ENCODE measurements at regions of chr15 and their contacts with region 1.

Region 1: DNA sequence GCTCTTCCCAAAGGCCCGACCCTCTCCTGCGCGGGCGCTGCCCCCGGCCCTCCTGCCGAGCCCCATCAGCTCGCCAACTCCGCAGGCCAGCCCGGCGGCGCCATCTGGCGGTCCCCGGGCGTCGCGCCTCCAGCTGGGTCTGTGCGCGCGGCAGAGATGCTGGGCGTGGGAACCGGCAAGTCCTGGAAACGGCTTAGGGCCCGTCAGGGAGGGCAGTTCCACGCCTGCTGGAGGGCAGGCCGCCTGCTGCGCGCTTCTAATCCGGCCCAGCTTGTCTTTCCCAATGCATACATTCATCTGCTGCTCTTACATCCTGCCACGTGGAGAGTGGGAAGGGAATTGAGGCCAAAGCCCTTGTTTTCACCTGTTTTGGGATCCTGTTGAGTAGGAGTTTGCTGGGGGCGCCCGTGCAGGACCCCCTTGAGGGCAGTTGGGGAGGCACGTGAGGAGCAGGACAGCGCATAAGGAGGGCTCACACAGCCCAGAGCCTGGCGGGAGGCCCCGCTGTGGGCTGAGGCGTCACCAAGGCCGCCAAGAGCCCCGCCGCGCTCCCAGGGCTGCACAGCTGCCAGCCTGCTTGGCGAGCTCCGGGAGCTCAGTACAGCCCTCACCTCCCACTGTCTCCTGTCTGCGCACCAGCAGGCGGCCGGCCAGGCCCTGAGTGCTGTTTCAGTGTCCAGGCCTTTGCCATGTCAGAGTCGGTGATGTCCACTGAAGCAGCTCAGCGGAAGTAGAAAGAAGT is 165.6 kb downstream of the NSMCE3 start:
- DNase-seq: peak in 8 of 9 experiments; percentile 27 to 67 (median 57)
- ATAC-seq: peak; percentile 77
- H3K4me3 ChIP-seq: no peak overlapping the region
- H3K4me3 Mint-ChIP-seq: no peak overlapping the region
- H3K27ac ChIP-seq: no peak overlapping the region
- H3K27ac Mint-ChIP-seq: no peak overlapping the region
- H3K4me1 ChIP-seq: no peaks in the 10 kb centered on the region
- H3K4me1 Mint-ChIP-seq: peaks cover 11% of the 10 kb centered on the region
- H3K27me3 ChIP-seq: no peaks in the 10 kb centered on the region
- H3K27me3 Mint-ChIP-seq: no peaks in the 10 kb centered on the region
- CTCF ChIP-seq: peak; percentile 57

Region 2: DNA sequence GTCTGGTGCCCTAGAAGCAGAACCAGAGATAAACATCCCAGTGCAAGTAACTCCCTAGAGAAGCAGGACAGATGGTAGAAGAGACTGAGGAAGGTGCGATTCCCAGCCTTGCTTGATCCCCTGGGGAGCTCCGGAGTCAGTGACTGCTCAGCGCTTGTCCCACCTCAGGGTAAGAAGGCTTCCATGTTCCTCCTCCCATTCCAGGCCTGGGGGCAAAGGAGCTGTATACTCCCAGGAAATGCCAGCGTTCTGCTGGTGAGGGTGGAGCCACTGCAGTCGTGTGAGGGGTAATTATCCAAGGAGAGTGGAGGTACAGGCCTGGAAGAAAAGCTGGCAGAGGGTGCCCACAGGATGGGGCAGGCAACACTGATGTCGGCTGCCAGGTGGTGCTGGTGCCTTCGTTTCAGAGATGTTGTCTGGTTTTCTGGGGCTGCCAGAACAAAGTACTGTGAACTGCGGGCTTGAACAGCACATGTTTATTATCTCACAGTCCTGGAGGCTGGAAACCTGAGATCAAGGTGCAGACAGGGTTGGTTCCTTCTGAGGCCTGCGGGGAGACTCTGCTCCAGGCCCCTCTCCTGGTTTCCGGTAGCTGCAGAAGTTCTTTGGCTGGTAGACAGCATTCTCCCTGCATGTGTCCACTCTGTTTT is 230.3 kb before region 1 on chr15:
- CTCF ChIA-PET with region 1: interaction called, 19 read pairs
- POLR2A ChIA-PET with region 1: no interaction called
- intact Hi-C with region 1: no loop called
- DNase-seq: peak in 6 of 9 experiments; percentile 37 to 74 (median 66)
- ATAC-seq: peak; percentile 88
- H3K4me3 ChIP-seq: no peak overlapping the region
- H3K4me3 Mint-ChIP-seq: no peak overlapping the region
- H3K27ac ChIP-seq: no peak overlapping the region
- H3K27ac Mint-ChIP-seq: no peak overlapping the region
- H3K4me1 ChIP-seq: peaks cover 21% of the 10 kb centered on the region
- H3K4me1 Mint-ChIP-seq: peaks cover 21% of the 10 kb centered on the region
- H3K27me3 ChIP-seq: no peaks in the 10 kb centered on the region
- H3K27me3 Mint-ChIP-seq: no peaks in the 10 kb centered on the region
- CTCF ChIP-seq: peak; percentile 60

Region 3: GRCh38 chr15:28921919-28922706 is 181.9 kb before region 1 on chr15:
- CTCF ChIA-PET with region 1: interaction called, 10 read pairs
- POLR2A ChIA-PET with region 1: no interaction called
- intact Hi-C with region 1: no loop called
- DNase-seq: peak in 1 of 9 experiments; percentile 30
- ATAC-seq: no peak
- H3K4me3 ChIP-seq: peak overlapping the region in 1 of 2 experiments; percentile 4
- H3K4me3 Mint-ChIP-seq: peak overlapping the region; percentile 79
- H3K27ac ChIP-seq: peak overlapping the region in 1 of 2 experiments; percentile 60
- H3K27ac Mint-ChIP-seq: peak overlapping the region; percentile 86
- H3K4me1 ChIP-seq: peaks cover 72% of the 10 kb centered on the region
- H3K4me1 Mint-ChIP-seq: peaks cover 81% of the 10 kb centered on the region
- H3K27me3 ChIP-seq: no peaks in the 10 kb centered on the region
- H3K27me3 Mint-ChIP-seq: no peaks in the 10 kb centered on the region
- CTCF ChIP-seq: no peak

Region 4: GRCh38 chr15:29090617-29091466 is 13.2 kb before region 1 on chr15:
- CTCF ChIA-PET with region 1: interaction called, 68 read pairs
- POLR2A ChIA-PET with region 1: interaction called, 3 read pairs
- intact Hi-C with region 1: no loop called
- DNase-seq: peak; percentile 21 to 70 (median 52)
- ATAC-seq: peak; percentile 77
- H3K4me3 ChIP-seq: peak overlapping the region in 1 of 2 experiments; percentile 30
- H3K4me3 Mint-ChIP-seq: no peak overlapping the region
- H3K27ac ChIP-seq: peak overlapping the region in 1 of 2 experiments; percentile 74
- H3K27ac Mint-ChIP-seq: peak overlapping the region; percentile 55
- H3K4me1 ChIP-seq: peaks cover 33% of the 10 kb centered on the region
- H3K4me1 Mint-ChIP-seq: peaks cover 39% of the 10 kb centered on the region
- H3K27me3 ChIP-seq: no peaks in the 10 kb centered on the region
- H3K27me3 Mint-ChIP-seq: no peaks in the 10 kb centered on the region
- CTCF ChIP-seq: peak; percentile 80

Region 5: GRCh38 chr15:29129926-29130325 is 25.9 kb after region 1 on chr15:
- CTCF ChIA-PET with region 1: interaction called, 10 read pairs
- POLR2A ChIA-PET with region 1: no interaction called
- intact Hi-C with region 1: no loop called
- DNase-seq: no peak
- ATAC-seq: no peak
- H3K4me3 ChIP-seq: no peak overlapping the region
- H3K4me3 Mint-ChIP-seq: no peak overlapping the region
- H3K27ac ChIP-seq: no peak overlapping the region
- H3K27ac Mint-ChIP-seq: no peak overlapping the region
- H3K4me1 ChIP-seq: no peaks in the 10 kb centered on the region
- H3K4me1 Mint-ChIP-seq: peaks cover 3% of the 10 kb centered on the region
- H3K27me3 ChIP-seq: no peaks in the 10 kb centered on the region
- H3K27me3 Mint-ChIP-seq: peaks cover 12% of the 10 kb centered on the region
- CTCF ChIP-seq: no peak

Region 6: GRCh38 chr15:30001602-30002001 is 897.6 kb after region 1 on chr15:
- CTCF ChIA-PET with region 1: no interaction called
- POLR2A ChIA-PET with region 1: no interaction called
- intact Hi-C with region 1: no loop called
- DNase-seq: no peak
- ATAC-seq: no peak
- H3K4me3 ChIP-seq: no peak overlapping the region
- H3K4me3 Mint-ChIP-seq: no peak overlapping the region
- H3K27ac ChIP-seq: no peak overlapping the region
- H3K27ac Mint-ChIP-seq: no peak overlapping the region
- H3K4me1 ChIP-seq: no peaks in the 10 kb centered on the region
- H3K4me1 Mint-ChIP-seq: no peaks in the 10 kb centered on the region
- H3K27me3 ChIP-seq: no peaks in the 10 kb centered on the region
- H3K27me3 Mint-ChIP-seq: peaks cover 10% of the 10 kb centered on the region
- CTCF ChIP-seq: no peak

Measured in CD8-positive, alpha-beta T cell (primary cell).